Gastrocnemius medialis (tissue), 4 donors: ENCODE measurements at regions of chr10 and their contacts with region 1.

Region 1: DNA sequence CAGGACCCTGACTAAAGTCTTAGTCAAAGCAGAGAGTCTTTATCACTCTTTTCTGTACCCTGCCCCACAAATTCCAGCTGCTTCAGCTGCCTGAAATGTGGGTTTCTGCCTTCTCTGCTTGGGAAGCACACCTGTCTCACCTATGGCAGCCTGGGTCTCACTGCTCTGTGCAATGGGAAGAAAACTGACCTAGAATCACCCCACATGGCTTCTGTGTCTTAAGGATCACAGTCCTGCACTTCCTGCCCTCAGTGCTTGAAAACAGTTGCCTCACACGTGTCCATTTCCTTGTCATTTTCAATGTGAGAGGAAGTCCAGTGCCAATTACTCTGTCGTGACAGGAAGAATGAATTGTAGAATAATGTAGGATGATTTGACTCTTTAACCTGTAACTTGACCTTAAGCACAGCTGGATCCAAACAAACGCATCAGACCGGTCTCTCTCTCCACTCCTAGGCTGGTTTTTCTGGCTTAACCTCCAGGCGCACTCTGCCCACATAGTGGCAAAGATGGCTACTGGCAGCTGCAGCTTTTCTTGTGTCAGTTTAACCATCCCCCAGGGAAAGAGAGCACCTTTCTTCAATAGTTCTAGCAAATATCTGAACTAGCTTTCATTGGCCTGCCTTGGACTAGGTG is 29.5 kb upstream of the PNLIPRP3 start:
- DNase-seq: no peak
- ATAC-seq: no peak
- H3K4me3 ChIP-seq: no peak overlapping the region
- H3K27ac ChIP-seq: no peak overlapping the region
- H3K4me1 ChIP-seq: no peaks in the 10 kb centered on the region
- H3K27me3 ChIP-seq: no peaks in the 10 kb centered on the region
- CTCF ChIP-seq: no peak
- POLR2A ChIP-seq: no peak

Region 2: DNA sequence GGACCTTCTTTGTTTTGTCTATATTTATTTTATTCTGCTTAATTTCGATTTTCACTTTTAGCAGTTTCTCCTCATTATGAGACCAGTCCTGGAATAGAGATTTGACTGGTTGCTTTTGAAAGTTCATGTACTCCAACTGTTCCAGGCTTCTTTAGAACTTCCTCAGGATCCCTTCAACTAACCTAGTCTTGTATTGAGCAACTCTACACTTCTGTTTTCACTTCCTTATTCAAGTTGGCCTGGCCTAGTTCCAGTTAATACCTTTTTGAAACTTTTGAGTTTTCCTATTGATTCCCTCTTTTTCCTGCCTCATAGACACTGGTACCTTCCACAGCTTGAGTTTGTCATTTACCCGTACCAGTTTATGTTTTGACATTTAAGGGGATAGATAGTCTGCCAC is 883.2 kb before region 1 on chr10:
- in situ Hi-C with region 1: no loop called
- intact Hi-C with region 1: loop called (anchors 10 kb)
- DNase-seq: no peak
- ATAC-seq: no peak
- H3K4me3 ChIP-seq: no peak overlapping the region
- H3K27ac ChIP-seq: no peak overlapping the region
- H3K4me1 ChIP-seq: no peaks in the 10 kb centered on the region
- H3K27me3 ChIP-seq: no peaks in the 10 kb centered on the region
- CTCF ChIP-seq: no peak
- POLR2A ChIP-seq: no peak

Region 3: GRCh38 chr10:116748041-116748440 is 349.9 kb after region 1 on chr10:
- in situ Hi-C with region 1: no loop called
- intact Hi-C with region 1: no loop called
- DNase-seq: no peak
- ATAC-seq: no peak
- H3K4me3 ChIP-seq: no peak overlapping the region
- H3K27ac ChIP-seq: no peak overlapping the region
- H3K4me1 ChIP-seq: peaks cover 0 to 4% of the 10 kb centered on the region in 2 donors
- H3K27me3 ChIP-seq: no peaks in the 10 kb centered on the region
- CTCF ChIP-seq: no peak
- POLR2A ChIP-seq: no peak

Region 4: GRCh38 chr10:116849248-116850057 is 451.3 kb after region 1 on chr10 and contains the start of gene ENO4:
- in situ Hi-C with region 1: no loop called
- intact Hi-C with region 1: no loop called
- DNase-seq: no peak
- ATAC-seq: peak in 1 of 2 donors; percentile 21
- H3K4me3 ChIP-seq: peak within 1 kb of the TSS; percentile 47 to 59 (median 51)
- H3K27ac ChIP-seq: no peak within 1 kb of the TSS
- H3K4me1 ChIP-seq: peaks cover 0 to 9% of the 10 kb centered on the region in 2 donors
- H3K27me3 ChIP-seq: peaks cover 14 to 27% (median 18%) of the 10 kb centered on the region in 3 donors
- CTCF ChIP-seq: no peak
- POLR2A ChIP-seq: no peak
- total RNA-seq, gene ENO4: not detected